Endothelial cell of umbilical vein (primary cell): ENCODE measurements at regions of chr5 and their contacts with region 1.

Region 1: GRCh38 chr5:54807421-54807820 is 178.0 kb downstream of the ESM1 start:
- DNase-seq: peak; percentile 84
- H3K4me3 ChIP-seq: no peak overlapping the region
- H3K27ac ChIP-seq: peak overlapping the region; percentile 80
- H3K4me1 ChIP-seq: peaks cover 13% of the 10 kb centered on the region
- H3K27me3 ChIP-seq: no peaks in the 10 kb centered on the region
- CTCF ChIP-seq: no peak
- POLR2A ChIP-seq: no peak

Region 2: GRCh38 chr5:54743997-54744788 is 63.2 kb before region 1 on chr5:
- CTCF ChIA-PET with region 1: no interaction called
- POLR2A ChIA-PET with region 1: no interaction called
- dilution Hi-C with region 1: no loop called
- intact Hi-C with region 1: loop called (anchors 1 kb)
- DNase-seq: peak; percentile 73
- H3K4me3 ChIP-seq: no peak overlapping the region
- H3K27ac ChIP-seq: peak overlapping the region; percentile 46
- H3K4me1 ChIP-seq: peaks cover 20% of the 10 kb centered on the region
- H3K27me3 ChIP-seq: no peaks in the 10 kb centered on the region
- CTCF ChIP-seq: no peak
- POLR2A ChIP-seq: no peak

Region 3: GRCh38 chr5:55151923-55152842 is 344.8 kb after region 1 on chr5:
- CTCF ChIA-PET with region 1: no interaction called
- POLR2A ChIA-PET with region 1: no interaction called
- dilution Hi-C with region 1: no loop called
- intact Hi-C with region 1: loop called (anchors 1 kb)
- DNase-seq: peak; percentile 40
- H3K4me3 ChIP-seq: no peak overlapping the region
- H3K27ac ChIP-seq: peak overlapping the region; percentile 35
- H3K4me1 ChIP-seq: peaks cover 40% of the 10 kb centered on the region
- H3K27me3 ChIP-seq: no peaks in the 10 kb centered on the region
- CTCF ChIP-seq: no peak
- POLR2A ChIP-seq: no peak